CD4-positive, alpha-beta memory T cell (primary cell): ENCODE measurements at regions of chr10 and their contacts with region 1.

Region 1: GRCh38 chr10:84264611-84265141 is 19.8 kb downstream of the RGR start:
- DNase-seq: peak; percentile 57 to 68 (median 58)
- H3K4me3 ChIP-seq: no peak overlapping the region
- H3K4me3 Mint-ChIP-seq: no peak overlapping the region
- H3K27ac ChIP-seq: no peak overlapping the region
- H3K27ac Mint-ChIP-seq: no peak overlapping the region
- H3K4me1 ChIP-seq: no peaks in the 10 kb centered on the region
- H3K4me1 Mint-ChIP-seq: peaks cover 8 to 15% (median 10%) of the 10 kb centered on the region in 4 donors
- H3K27me3 ChIP-seq: no peaks in the 10 kb centered on the region
- H3K27me3 Mint-ChIP-seq: peaks cover 10 to 27% of the 10 kb centered on the region in 2 donors

Region 2: GRCh38 chr10:84333864-84334451 is 69.3 kb after region 1 on chr10:
- CTCF ChIA-PET with region 1: interaction called, 6 read pairs
- POLR2A ChIA-PET with region 1: interaction called, 7 read pairs
- intact Hi-C with region 1: loop called (anchors 2 kb)
- DNase-seq: peak; percentile 85 to 95 (median 90)
- H3K4me3 ChIP-seq: peak overlapping the region in 1 of 2 donors; percentile 46
- H3K4me3 Mint-ChIP-seq: peak overlapping the region; percentile 8 to 78 (median 68)
- H3K27ac ChIP-seq: peak overlapping the region; percentile 62
- H3K27ac Mint-ChIP-seq: peak overlapping the region in 4 of 7 donors; percentile 93 to 100 (median 95)
- H3K4me1 ChIP-seq: peaks cover 91% of the 10 kb centered on the region
- H3K4me1 Mint-ChIP-seq: peaks cover 36 to 58% (median 39%) of the 10 kb centered on the region in 4 donors
- H3K27me3 ChIP-seq: no peaks in the 10 kb centered on the region
- H3K27me3 Mint-ChIP-seq: no peaks in the 10 kb centered on the region

Region 3: GRCh38 chr10:84375011-84375410 is 110.3 kb after region 1 on chr10:
- CTCF ChIA-PET with region 1: interaction called, 13 read pairs
- POLR2A ChIA-PET with region 1: no interaction called
- intact Hi-C with region 1: loop called (anchors 1 kb)
- DNase-seq: peak; percentile 35 to 57 (median 51)
- H3K4me3 ChIP-seq: no peak overlapping the region
- H3K4me3 Mint-ChIP-seq: peak overlapping the region in 2 of 8 donors; percentile 7 to 45
- H3K27ac ChIP-seq: no peak overlapping the region
- H3K27ac Mint-ChIP-seq: peak overlapping the region; percentile 1 to 61 (median 29)
- H3K4me1 ChIP-seq: peaks cover 8% of the 10 kb centered on the region
- H3K4me1 Mint-ChIP-seq: peaks cover 26 to 58% (median 29%) of the 10 kb centered on the region in 4 donors
- H3K27me3 ChIP-seq: no peaks in the 10 kb centered on the region
- H3K27me3 Mint-ChIP-seq: no peaks in the 10 kb centered on the region

Region 4: DNA sequence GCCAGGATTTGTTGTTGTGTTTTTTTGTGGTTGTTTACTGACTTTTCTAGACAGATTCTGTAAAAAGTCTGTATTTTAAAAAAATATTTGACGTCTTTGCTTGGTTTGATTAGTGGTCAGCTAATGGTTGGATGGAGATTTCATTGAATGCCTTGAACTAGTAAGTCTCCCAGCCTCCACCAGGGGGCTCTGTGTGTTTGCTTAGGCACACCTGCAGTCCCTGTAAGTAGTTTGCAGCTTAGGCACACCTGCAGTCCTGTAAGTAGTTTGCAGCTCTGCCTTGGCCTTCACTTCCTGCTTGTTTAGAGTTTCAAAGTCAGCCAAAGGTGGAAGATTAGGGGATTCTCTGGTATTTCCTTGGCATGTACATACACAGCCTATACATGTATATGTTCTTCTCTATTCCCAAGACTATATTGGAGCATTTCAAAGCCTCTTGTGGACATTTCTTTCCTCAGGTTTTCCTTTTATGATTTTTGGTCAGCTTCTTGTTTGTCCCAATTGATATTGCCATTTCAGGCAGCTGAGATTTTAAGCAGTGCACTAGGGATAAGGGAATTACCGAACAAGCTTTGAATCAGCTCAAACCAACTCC is 165.3 kb after region 1 on chr10:
- CTCF ChIA-PET with region 1: interaction called, 6 read pairs
- POLR2A ChIA-PET with region 1: no interaction called
- intact Hi-C with region 1: loop called (anchors 5 kb)
- DNase-seq: peak; percentile 50 to 71 (median 54)
- H3K4me3 ChIP-seq: no peak overlapping the region
- H3K4me3 Mint-ChIP-seq: peak overlapping the region in 1 of 8 donors; percentile 4
- H3K27ac ChIP-seq: no peak overlapping the region
- H3K27ac Mint-ChIP-seq: peak overlapping the region in 2 of 7 donors; percentile 8 to 65
- H3K4me1 ChIP-seq: peaks cover 19% of the 10 kb centered on the region
- H3K4me1 Mint-ChIP-seq: peaks cover 45 to 57% (median 48%) of the 10 kb centered on the region in 4 donors
- H3K27me3 ChIP-seq: no peaks in the 10 kb centered on the region
- H3K27me3 Mint-ChIP-seq: no peaks in the 10 kb centered on the region

Region 5: DNA sequence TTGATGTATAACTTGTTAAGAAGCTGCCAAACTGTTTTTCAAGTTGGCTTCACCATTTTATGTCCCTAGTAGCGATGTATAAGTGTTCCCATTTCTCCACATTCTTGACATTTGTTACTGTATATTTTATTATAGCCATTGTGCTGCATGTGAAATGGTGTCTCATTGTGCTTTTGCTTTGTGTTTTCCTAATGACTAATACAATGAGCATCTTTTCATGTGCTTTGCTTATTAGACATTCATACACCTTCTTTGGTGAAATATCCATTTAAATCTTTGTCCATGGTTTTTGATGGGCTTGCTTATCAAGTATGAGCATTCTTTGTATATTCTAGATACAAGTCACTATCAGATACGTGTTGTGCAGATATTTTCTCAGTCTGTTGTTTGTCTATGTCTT is 266.7 kb after region 1 on chr10:
- CTCF ChIA-PET with region 1: interaction called, 326 read pairs
- POLR2A ChIA-PET with region 1: no interaction called
- intact Hi-C with region 1: no loop called
- DNase-seq: no peak
- H3K4me3 ChIP-seq: no peak overlapping the region
- H3K4me3 Mint-ChIP-seq: no peak overlapping the region
- H3K27ac ChIP-seq: no peak overlapping the region
- H3K27ac Mint-ChIP-seq: no peak overlapping the region
- H3K4me1 ChIP-seq: no peaks in the 10 kb centered on the region
- H3K4me1 Mint-ChIP-seq: peaks cover 0 to 4% (median under 1%) of the 10 kb centered on the region in 4 donors
- H3K27me3 ChIP-seq: no peaks in the 10 kb centered on the region
- H3K27me3 Mint-ChIP-seq: peaks cover 0 to 2% of the 10 kb centered on the region in 2 donors